ENCODE measurements at regions of chr17 and their contacts with region 1.

Region 1: DNA sequence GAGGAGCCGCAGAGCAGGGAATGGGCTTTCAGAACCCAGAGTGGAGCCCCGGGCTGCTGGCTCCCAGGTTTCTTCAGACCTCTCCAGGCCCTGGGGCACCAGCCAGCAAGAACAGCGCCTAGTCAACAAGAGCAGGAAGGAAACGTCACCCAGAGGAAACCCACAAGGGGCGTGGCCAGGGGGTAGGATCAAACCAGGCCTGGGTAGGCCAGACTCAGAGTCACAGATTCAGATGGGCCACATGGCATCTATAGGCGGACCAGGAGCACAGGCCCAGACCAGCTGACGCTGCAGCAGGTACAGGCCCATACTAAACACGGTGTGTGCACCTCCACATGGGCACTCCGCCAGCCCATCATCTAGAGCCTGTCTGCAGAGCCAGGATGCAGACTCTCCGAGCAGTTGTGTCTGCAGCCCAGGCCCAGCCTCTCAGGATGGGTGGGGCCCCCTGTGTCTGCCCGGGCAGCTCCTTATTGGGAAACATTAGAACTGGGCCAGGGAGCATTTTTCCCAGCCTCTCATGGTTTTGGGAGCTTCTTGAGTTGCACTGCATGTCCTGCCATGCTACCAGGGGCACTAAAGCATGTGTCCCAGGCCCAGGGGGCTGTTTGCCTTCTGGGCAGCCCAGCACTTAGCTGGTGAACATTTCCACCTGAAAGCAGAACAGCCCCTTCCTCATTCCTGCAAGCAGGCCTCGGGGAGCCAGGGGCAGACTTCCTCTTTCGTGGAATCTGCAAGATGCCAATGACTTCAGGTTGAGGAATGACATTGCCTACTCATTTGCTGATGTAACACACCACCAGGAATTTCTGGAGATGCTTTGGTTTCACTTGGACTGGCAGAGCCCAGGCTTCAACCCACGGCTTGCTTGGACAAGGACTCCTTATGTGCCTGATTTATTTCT is at the start of gene NLRP1:
- DNase-seq: peak; percentile 89 to 93 (median 91)
- ATAC-seq: peak; percentile 92 to 96 (median 94)
- H3K4me3 ChIP-seq: peak within 1 kb of the TSS; percentile 14 to 79 (median 61)
- H3K27ac ChIP-seq: peak within 1 kb of the TSS; percentile 78 to 95 (median 85)
- H3K4me1 ChIP-seq: peaks cover 4 to 64% (median 31%) of the 10 kb centered on the region in 12 donors
- H3K27me3 ChIP-seq: peaks cover 0 to 4% (median 0%) of the 10 kb centered on the region in 9 donors
- CTCF ChIP-seq: no peak
- POLR2A ChIP-seq: peak in 1 of 2 donors; percentile 68
- total RNA-seq, gene NLRP1: 3.8 to 16.7 (median 8.8) TPM

Region 2: GRCh38 chr17:5667871-5668270 is 83.2 kb after region 1 on chr17:
- intact Hi-C with region 1: no loop called
- DNase-seq: no peak
- ATAC-seq: no peak
- H3K4me3 ChIP-seq: no peak overlapping the region
- H3K27ac ChIP-seq: no peak overlapping the region
- H3K4me1 ChIP-seq: no peaks in the 10 kb centered on the region
- H3K27me3 ChIP-seq: peaks cover 0 to 38% (median 13%) of the 10 kb centered on the region in 9 donors
- CTCF ChIP-seq: peak in 1 of 12 donors; percentile 8
- POLR2A ChIP-seq: no peak

Region 3: GRCh38 chr17:5683241-5683640 is 98.6 kb after region 1 on chr17:
- intact Hi-C with region 1: no loop called
- DNase-seq: no peak
- ATAC-seq: no peak
- H3K4me3 ChIP-seq: no peak overlapping the region
- H3K27ac ChIP-seq: no peak overlapping the region
- H3K4me1 ChIP-seq: no peaks in the 10 kb centered on the region
- H3K27me3 ChIP-seq: peaks cover 0 to 14% (median 0%) of the 10 kb centered on the region in 9 donors
- CTCF ChIP-seq: no peak
- POLR2A ChIP-seq: no peak

Region 4: GRCh38 chr17:5706577-5707216 is 122.1 kb after region 1 on chr17:
- intact Hi-C with region 1: loop called in 6 of 10 experiments (anchors 2 to 5 kb)
- DNase-seq: peak in 3 of 5 donors; percentile 20 to 42 (median 41)
- ATAC-seq: peak in 1 of 4 donors; percentile 47
- H3K4me3 ChIP-seq: no peak overlapping the region
- H3K27ac ChIP-seq: no peak overlapping the region
- H3K4me1 ChIP-seq: no peaks in the 10 kb centered on the region
- H3K27me3 ChIP-seq: peaks cover 0 to 24% (median 5%) of the 10 kb centered on the region in 9 donors
- CTCF ChIP-seq: peak; percentile 31 to 66 (median 52)
- POLR2A ChIP-seq: no peak

Region 5: DNA sequence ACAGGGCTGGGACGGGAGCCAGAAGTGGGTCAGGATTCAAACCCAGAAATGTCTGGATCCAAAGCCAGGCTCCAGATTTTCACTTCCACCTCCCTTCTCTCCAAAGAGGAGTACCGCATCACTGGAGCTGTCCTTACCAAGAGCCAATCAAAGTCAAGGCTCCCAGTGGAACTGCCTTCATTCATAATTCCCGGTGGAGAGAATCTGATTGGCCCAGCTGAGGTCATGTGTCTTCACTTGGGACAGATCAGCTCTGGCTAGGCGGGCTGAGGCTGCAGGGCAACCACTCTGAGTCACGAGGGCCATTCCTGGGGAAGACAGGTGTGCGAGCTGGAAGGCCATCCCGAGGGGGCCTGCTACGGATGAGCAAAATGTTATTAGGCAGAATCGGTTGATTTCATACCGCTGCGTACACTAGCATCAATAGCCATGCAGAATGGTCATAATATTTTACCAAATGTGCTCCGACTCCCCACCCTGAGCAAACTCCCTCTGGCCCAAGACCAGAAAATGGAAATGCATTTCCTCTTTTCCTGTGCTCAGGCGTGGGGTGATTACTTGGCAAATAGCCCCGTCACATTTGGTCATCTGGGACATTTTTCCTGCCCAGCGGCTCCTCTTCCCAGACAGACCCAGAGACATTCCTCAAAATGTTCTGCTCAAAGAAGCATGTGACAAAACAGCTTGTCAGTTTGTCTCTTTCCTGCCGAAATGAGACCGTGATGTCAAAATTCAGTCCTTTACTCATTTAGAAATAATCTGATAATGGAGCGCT is 739.1 kb after region 1 on chr17:
- intact Hi-C with region 1: loop called in 1 of 10 experiments (anchors 5 kb)
- DNase-seq: peak in 2 of 5 donors; percentile 26 to 33
- ATAC-seq: peak in 1 of 4 donors; percentile 61
- H3K4me3 ChIP-seq: peak overlapping the region in 1 of 12 donors; percentile 11
- H3K27ac ChIP-seq: peak overlapping the region in 7 of 12 donors; percentile 4 to 59 (median 39)
- H3K4me1 ChIP-seq: peaks cover 0 to 40% (median 8%) of the 10 kb centered on the region in 12 donors
- H3K27me3 ChIP-seq: no peaks in the 10 kb centered on the region
- CTCF ChIP-seq: no peak
- POLR2A ChIP-seq: no peak

Region 6: DNA sequence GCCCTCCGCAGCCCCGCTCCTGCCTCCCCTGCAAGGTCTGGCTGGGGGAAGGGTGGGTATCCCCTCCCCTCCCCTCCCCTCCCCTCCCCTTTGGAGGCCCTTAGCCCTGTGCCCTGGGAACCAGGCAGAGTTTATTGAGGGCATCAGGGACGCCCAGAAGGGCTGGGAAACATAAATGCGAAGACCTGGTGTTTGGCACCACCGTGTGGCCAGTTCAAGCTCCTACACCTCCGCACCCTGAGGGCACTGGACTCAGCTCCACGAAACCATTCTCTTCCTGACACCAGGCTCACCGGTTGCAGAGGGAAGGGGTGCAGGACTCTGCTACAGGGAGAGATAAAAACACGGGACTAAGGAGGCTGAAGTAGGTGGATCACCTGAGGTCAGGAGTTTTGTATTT is 851.3 kb after region 1 on chr17:
- intact Hi-C with region 1: loop called in 4 of 10 experiments (anchors 1 to 5 kb)
- DNase-seq: peak in 4 of 5 donors; percentile 44 to 60 (median 49)
- ATAC-seq: peak; percentile 61 to 95 (median 90)
- H3K4me3 ChIP-seq: no peak overlapping the region
- H3K27ac ChIP-seq: no peak overlapping the region
- H3K4me1 ChIP-seq: no peaks in the 10 kb centered on the region
- H3K27me3 ChIP-seq: peaks cover 0 to 35% (median 16%) of the 10 kb centered on the region in 9 donors
- CTCF ChIP-seq: peak; percentile 65 to 82 (median 76)
- POLR2A ChIP-seq: no peak